Adrenal gland (tissue), 19 donors: ENCODE measurements at regions of chr10 and their contacts with region 1.

Region 1: GRCh38 chr10:63699785-63700184 is 178.6 kb downstream of the REEP3 start:
- DNase-seq: peak; percentile 69 to 90 (median 83)
- H3K4me3 ChIP-seq: peak overlapping the region in 1 of 4 donors; percentile 21
- H3K27ac ChIP-seq: peak overlapping the region; percentile 61 to 95 (median 85)
- H3K4me1 ChIP-seq: peaks cover 34 to 43% of the 10 kb centered on the region in 2 donors
- H3K27me3 ChIP-seq: no peaks in the 10 kb centered on the region
- CTCF ChIP-seq: no peak
- POLR2A ChIP-seq: no peak

Region 2: GRCh38 chr10:63456437-63457210 is 243.2 kb before region 1 on chr10:
- intact Hi-C with region 1: no loop called
- DNase-seq: no peak
- H3K4me3 ChIP-seq: no peak overlapping the region
- H3K27ac ChIP-seq: no peak overlapping the region
- H3K4me1 ChIP-seq: peaks cover 0 to 19% of the 10 kb centered on the region in 2 donors
- H3K27me3 ChIP-seq: no peaks in the 10 kb centered on the region
- CTCF ChIP-seq: no peak
- POLR2A ChIP-seq: no peak

Region 3: DNA sequence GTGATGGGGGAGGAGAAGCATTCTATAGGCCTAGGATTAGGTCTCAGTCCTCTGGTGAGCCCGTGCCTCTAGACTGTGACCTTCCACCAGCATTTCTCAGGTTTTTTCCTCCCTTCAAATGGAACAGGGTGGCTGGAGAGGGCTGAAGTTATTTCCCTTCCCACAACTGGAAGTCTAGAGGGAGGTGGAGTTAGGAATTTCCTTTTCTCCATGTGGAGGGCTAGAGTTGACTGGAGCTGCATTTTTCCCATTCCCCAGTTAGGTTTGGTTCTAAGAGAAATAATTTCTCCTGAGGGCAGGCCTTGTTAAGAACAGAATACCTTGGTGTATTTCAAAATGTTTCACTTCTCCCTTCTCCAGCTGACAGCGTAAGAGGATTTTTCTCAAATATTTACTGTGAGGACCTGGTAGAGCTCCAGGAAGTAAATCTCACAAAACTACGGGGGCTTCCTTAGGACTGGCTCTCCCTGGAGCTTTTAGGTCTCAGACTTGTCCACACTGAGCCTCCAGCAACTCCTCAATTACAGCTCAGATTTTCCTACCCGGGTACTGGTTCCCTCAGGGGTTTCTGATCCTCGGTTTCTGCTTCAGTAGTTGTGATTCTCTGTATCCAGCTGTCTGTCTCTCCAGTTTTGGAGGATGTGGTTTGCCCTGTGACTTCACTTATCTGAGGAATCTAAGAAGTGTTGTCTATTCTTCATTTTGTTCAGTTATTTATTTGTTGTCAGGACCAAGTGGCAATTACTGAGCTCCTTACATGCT is 184.6 kb before region 1 on chr10:
- intact Hi-C with region 1: loop called in 1 of 2 experiments (anchors 10 kb)
- DNase-seq: no peak
- H3K4me3 ChIP-seq: no peak overlapping the region
- H3K27ac ChIP-seq: peak overlapping the region in 3 of 5 donors; percentile 29 to 71 (median 43)
- H3K4me1 ChIP-seq: peaks cover 0 to 50% of the 10 kb centered on the region in 2 donors
- H3K27me3 ChIP-seq: no peaks in the 10 kb centered on the region
- CTCF ChIP-seq: no peak
- POLR2A ChIP-seq: no peak